ENCODE measurements at regions of chr7 and their contacts with region 1.

Region 1: DNA sequence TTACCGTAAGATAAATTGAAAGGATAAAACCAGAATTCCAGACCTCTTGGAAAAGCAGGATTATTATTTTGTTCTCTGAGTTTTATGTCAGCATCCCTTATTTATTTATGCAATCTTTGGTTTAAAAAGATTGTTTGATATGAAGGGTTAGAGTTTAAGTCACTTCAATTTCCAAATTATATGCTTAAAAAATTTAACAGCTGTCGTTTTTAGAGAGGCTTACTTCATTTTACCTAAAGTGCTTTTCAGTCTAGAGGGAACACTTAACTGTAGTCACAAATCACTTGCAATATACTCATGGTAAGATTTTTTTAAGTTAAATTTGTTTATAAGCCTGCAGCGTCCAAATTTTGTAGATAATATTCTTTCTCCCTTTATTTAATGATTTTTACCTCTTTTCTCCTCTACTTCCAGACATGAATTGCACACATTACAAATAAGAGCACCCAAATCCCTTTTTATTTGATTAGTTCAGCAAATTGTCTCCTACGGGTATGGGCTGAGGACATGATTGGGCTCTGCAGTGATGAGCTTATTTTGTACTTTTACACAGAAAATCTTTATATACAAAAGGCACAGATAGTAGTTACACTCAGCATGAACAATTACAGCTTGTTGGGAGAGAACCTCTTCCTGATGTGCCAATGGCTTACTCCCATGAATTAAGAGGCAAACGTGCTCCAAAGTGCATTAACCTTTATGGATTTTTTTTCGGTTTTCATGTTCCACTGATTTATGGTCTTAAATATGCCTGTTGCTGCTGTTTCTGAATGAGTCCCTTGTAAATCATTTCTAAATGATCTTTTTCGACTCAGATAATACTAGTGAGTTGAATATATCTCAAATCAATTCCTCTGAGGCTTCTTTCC is 319.3 kb upstream of the LRGUK start:
- DNase-seq: no peak
- ATAC-seq: no peak
- H3K4me3 ChIP-seq: no peak overlapping the region
- H3K27ac ChIP-seq: no peak overlapping the region
- H3K4me1 ChIP-seq: no peaks in the 10 kb centered on the region
- H3K27me3 ChIP-seq: no peaks in the 10 kb centered on the region
- CTCF ChIP-seq: no peak

Region 2: DNA sequence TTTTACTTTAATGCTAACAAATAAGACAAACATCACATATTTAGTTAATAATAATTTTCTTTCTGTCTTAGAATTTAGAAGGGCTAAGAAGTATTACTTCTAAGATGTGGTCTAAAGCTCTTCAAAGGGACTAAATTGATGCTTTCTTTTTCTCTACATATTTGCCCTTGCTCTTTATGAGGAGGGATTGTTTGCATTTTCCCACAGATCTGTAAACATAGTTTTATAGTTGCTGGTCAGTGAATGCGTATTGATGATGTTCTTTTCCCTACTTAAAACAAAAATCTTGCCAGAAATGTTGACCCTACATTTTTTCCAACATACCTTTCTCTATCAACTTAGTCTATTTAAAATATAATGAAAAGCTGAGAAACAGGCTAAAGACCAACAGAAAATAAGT is 53.1 kb before region 1 on chr7:
- intact Hi-C with region 1: loop called in 1 of 2 experiments (anchors 5 kb)
- DNase-seq: no peak
- ATAC-seq: no peak
- H3K4me3 ChIP-seq: no peak overlapping the region
- H3K27ac ChIP-seq: no peak overlapping the region
- H3K4me1 ChIP-seq: no peaks in the 10 kb centered on the region
- H3K27me3 ChIP-seq: no peaks in the 10 kb centered on the region
- CTCF ChIP-seq: no peak

Measured in psoas muscle (tissue), 8 donors.